ENCODE measurements at regions of chr10 and their contacts with region 1.

Region 1: DNA sequence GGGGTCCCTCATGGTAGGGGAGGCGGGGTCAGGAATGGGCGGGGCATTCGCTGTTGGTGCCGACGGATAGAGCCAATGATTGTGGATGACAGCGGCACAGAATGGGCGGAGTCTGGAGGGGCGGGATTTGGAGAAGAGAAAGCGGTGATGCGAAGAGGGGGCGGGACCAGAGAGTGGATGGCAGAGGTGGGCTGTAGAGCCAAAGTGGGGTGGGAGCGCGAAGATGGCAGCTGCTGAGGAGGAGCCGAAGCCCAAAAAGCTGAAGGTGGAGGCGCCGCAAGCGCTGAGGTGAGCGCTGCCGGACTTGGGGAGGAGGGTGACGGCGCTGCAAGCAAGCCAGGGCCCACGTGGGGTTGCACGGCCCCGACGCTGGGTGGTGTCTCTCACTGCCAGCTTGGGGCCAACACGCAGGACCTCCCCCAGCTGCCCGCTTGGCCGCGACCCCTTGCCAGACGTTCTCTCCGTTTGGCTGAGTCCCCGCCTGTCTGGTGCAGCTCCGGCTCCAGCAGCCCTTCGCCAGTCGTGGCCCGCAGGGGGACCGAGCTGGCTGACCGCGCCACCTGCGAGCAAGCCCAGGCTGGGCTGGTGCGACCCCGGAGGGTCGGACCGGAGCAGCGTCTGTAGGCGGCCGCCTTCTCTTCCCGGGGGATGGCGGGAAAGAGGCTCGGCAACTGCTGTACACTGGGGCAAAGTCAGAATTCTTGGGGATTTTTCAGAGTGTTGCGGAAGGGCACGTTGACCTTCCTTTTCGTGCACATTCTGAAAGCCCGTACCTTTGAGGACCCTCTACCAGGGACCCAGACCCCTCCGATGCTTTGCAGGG is at the start of gene ADK:
- DNase-seq: peak; percentile 100
- H3K4me3 Mint-ChIP-seq: no peak within 1 kb of the TSS
- H3K27ac Mint-ChIP-seq: no peak within 1 kb of the TSS
- H3K4me1 Mint-ChIP-seq: peaks cover 29% of the 10 kb centered on the region
- H3K27me3 Mint-ChIP-seq: no peaks in the 10 kb centered on the region
- CTCF ChIP-seq: no peak
- total RNA-seq, gene ADK: 62.5 and 66.6 TPM in 2 replicates

Region 2: DNA sequence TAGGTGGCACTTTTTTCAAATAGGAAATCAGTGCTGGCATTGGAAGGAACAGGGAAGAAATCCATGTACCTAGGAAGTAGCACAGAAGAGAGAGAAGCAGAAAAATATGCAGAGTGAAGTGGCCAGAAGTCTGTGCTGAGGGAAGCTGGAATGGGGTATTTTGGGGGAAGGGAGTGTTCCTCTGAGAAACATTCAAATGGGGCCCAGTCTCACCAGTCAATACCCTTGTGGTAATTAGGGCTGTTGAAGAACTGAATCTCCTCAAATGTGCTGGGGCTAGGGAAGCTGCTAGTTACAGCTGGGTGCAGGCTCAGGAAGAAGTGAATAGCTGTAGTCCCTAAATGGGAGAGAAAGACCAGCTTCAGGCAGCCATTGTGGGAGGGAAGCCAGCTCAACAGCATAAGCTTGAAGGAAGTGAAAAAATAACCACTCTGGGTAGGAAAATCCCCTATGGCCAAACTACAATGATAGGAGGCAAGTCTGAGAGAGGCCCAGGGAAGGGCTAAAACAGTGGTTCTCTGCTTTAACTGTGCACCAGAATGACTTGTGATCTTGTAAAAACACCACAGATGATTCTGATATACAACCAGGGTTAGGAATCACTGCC is 347.5 kb before region 1 on chr10:
- CTCF ChIA-PET with region 1: no interaction called
- intact Hi-C with region 1: no loop called
- DNase-seq: no peak
- H3K4me3 Mint-ChIP-seq: no peak overlapping the region
- H3K27ac Mint-ChIP-seq: no peak overlapping the region
- H3K4me1 Mint-ChIP-seq: peaks cover 3% of the 10 kb centered on the region
- H3K27me3 Mint-ChIP-seq: no peaks in the 10 kb centered on the region
- CTCF ChIP-seq: no peak

Region 3: DNA sequence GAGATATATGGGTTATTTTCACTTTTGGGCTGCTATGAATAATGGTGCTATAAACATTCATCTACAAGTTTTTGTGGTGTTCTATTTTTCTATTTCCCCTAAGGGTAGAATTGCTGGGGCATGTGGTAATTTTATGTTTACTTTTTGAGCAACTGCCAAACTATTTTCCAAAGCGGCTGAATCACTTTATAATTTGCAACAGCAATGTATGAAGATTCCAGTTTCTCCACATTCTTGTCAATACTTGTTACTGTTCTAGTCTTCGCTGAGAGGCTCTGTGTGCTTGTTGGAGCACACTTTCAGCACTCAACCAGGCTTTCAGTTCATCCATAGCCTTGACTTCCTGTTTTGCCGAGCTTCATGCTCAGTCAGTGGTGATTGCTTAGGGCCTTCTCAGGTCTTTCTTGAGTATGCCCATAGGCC is 38.7 kb after region 1 on chr10:
- CTCF ChIA-PET with region 1: interaction called, 12 read pairs
- intact Hi-C with region 1: no loop called
- DNase-seq: peak; percentile 59
- H3K4me3 Mint-ChIP-seq: peak overlapping the region; percentile 41
- H3K27ac Mint-ChIP-seq: peak overlapping the region; percentile 69
- H3K4me1 Mint-ChIP-seq: peaks cover 64% of the 10 kb centered on the region
- H3K27me3 Mint-ChIP-seq: no peaks in the 10 kb centered on the region
- CTCF ChIP-seq: no peak

Region 4: GRCh38 chr10:74213571-74214162 is 62.4 kb after region 1 on chr10:
- CTCF ChIA-PET with region 1: interaction called, 5 read pairs
- intact Hi-C with region 1: loop called (anchors 2 kb)
- DNase-seq: peak; percentile 54
- H3K4me3 Mint-ChIP-seq: no peak overlapping the region
- H3K27ac Mint-ChIP-seq: peak overlapping the region; percentile 62
- H3K4me1 Mint-ChIP-seq: peaks cover 17% of the 10 kb centered on the region
- H3K27me3 Mint-ChIP-seq: no peaks in the 10 kb centered on the region
- CTCF ChIP-seq: peak; percentile 46

Region 5: DNA sequence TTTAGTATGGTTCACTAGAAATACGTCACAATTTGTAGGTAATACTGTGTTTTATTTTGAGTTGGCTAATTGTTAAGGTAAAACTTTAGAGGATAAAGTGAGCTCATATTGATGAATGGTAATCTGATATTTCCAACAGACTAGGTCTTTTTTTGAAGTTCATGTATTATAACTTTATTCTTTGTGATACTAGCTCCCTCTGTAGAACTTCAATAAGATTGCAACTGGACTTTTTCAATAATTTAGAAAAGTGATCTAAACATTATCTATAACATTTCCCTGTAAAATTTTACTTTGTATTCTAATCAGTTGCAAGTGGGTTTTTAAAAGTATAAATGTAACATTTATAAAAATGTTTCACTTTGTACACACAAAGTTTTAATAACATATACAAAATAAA is 83.3 kb after region 1 on chr10:
- CTCF ChIA-PET with region 1: interaction called, 5 read pairs
- intact Hi-C with region 1: loop called (anchors 1 kb)
- DNase-seq: no peak
- H3K4me3 Mint-ChIP-seq: no peak overlapping the region
- H3K27ac Mint-ChIP-seq: no peak overlapping the region
- H3K4me1 Mint-ChIP-seq: peaks cover 26% of the 10 kb centered on the region
- H3K27me3 Mint-ChIP-seq: no peaks in the 10 kb centered on the region
- CTCF ChIP-seq: no peak